GM12878 (cell line): ENCODE measurements at regions of chr18 and their contacts with region 1.

Region 1: DNA sequence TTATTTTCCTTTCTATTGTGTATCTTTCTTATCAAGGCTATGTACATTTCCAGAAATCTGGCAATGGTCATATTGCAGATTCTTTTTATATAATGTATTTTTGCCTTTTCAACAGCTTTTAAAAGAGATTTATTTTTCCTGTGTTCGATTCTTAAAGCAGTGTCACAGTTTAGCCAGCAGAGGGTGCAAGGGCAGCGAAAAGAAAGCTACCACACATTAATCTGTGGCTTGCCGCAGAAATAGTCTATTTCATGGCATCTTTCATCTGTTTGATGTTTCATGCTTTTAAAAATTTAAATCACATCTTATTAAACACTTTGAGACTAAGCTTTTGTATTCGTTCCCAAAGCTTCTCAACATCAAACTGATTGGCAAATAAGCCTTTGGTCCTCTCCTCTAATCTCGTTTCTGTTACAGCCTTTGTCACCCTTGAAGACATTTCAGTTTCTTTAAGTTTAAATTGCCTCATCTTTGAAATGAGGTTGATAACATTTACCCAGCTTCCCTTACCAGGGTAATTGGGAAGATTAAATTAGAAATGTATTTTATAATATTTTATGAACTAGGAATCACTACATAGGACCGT is 73.3 kb downstream of the PIK3C3 start:
- DNase-seq: no peak
- ATAC-seq: 0 out of 3 replicates have a peak, but pooled peaks have one; percentile 22
- H3K4me3 ChIP-seq: no peak overlapping the region
- H3K27ac ChIP-seq: no peak overlapping the region
- H3K4me1 ChIP-seq: peaks cover 33% of the 10 kb centered on the region
- H3K27me3 ChIP-seq: no peaks in the 10 kb centered on the region
- CTCF ChIP-seq: peak; percentile 63 to 77 (median 74)
- EP300 ChIP-seq: no peak
- POLR2A ChIP-seq: no peak
- RAD21 ChIP-seq: peak; percentile 40; the same call in 1 of the 2 replicates

Region 2: DNA sequence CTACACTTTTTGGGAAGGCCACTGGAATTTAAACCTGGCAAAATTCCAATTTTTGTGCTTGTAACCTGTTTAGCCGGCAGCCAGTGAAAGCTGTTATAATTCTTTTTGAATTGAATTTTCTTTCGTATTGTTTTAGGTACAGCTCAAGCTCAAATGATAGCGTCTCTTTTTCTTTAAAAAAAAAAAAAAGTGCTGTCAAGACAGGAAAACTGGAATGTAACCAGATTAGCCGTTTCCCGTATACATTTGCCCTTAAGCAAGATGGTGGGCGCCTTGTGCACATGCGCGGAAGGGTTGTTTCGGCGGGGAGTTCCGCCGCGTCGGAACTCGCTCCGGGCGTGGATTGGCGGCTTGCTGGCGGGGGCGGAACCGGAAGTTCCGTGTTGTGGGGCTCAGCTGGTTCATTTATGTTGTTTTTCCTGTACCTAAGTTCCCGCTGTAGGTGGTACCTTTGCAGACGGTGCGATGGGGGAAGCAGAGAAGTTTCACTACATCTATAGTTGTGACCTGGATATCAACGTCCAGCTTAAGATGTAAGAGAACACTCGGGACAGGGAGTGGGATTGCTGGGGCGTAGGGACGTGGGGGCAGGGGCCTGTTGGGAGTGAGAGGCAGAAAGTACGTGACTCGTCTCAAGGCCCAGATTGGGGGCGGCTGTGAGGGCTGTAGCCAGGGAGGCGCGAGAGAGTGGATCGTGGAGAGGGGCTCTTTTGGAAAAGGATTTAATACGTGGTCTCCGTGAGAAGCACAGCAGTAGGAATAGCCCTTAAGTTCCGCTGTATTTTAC is 73.3 kb before region 1 on chr18 and contains the start of gene PIK3C3:
- CTCF ChIA-PET with region 1: interaction called, 4 read pairs
- POLR2A ChIA-PET with region 1: interaction called, 3 read pairs
- RAD21 ChIA-PET with region 1: interaction called, 3 read pairs
- SMC1A ChIA-PET with region 1: interaction called, 6 read pairs
- in situ Hi-C with region 1: no loop called
- intact Hi-C with region 1: loop called (anchors 5 kb)
- DNase-seq: peak; percentile 92
- ATAC-seq: peak; percentile 93
- H3K4me3 ChIP-seq: peak within 1 kb of the TSS; percentile 94
- H3K27ac ChIP-seq: peak within 1 kb of the TSS; percentile 71
- H3K4me1 ChIP-seq: no peaks in the 10 kb centered on the region; the same call in 1 of the 2 replicates
- H3K27me3 ChIP-seq: no peaks in the 10 kb centered on the region
- CTCF ChIP-seq: no peak
- EP300 ChIP-seq: no peak
- POLR2A ChIP-seq: peak; percentile 74
- RAD21 ChIP-seq: no peak
- polyA plus RNA-seq, gene PIK3C3: 20.1 to 37.7 TPM

Region 3: DNA sequence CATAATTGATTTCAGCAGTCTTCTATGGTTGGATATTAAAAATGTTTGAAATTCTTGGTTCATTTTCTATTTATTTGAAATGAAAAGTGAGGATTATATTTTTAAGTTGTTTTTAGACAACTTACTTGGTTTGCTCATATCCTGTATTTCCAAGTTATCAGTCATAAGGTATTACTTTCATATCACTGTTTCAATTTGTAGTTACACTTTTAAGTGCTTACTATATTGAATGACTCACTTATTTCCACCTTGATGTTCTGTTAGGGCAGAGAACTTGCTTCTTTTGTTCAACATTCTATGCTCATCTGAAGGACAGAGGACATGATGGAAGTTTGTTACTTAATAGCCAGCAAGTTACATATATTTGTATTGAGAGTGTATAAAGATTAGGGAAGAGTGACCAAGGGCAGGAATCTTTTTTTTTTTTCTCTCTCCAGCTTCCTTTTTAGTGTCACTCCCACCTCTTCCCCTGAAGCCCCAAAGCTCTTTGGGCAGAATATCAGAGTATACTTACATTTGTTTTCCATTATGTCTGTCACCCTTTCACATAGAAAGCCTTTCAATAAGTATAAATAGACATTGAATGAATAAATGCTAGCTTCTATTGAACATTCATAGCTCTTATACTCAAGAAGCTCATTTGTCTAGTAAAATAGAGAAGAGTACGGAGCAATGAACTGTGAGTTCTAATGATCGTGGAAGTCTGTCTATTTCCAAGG is 45.2 kb before region 1 on chr18:
- CTCF ChIA-PET with region 1: interaction called, 12 read pairs
- POLR2A ChIA-PET with region 1: no interaction called
- RAD21 ChIA-PET with region 1: interaction called, 4 read pairs
- SMC1A ChIA-PET with region 1: interaction called, 10 read pairs
- in situ Hi-C with region 1: no loop called
- intact Hi-C with region 1: no loop called
- DNase-seq: no peak
- ATAC-seq: peak; percentile 94
- H3K4me3 ChIP-seq: no peak overlapping the region
- H3K27ac ChIP-seq: peak overlapping the region; percentile 50; the same call in 1 of the 2 replicates
- H3K4me1 ChIP-seq: peaks cover 9% of the 10 kb centered on the region
- H3K27me3 ChIP-seq: no peaks in the 10 kb centered on the region
- CTCF ChIP-seq: no peak
- EP300 ChIP-seq: peak in 1 of 2 experiments; percentile 36; a peak in 1 of 4 replicates
- POLR2A ChIP-seq: no peak
- RAD21 ChIP-seq: no peak

Region 4: GRCh38 chr18:42005782-42006181 is 22.6 kb before region 1 on chr18:
- CTCF ChIA-PET with region 1: interaction called, 22 read pairs
- POLR2A ChIA-PET with region 1: no interaction called
- RAD21 ChIA-PET with region 1: no interaction called
- SMC1A ChIA-PET with region 1: interaction called, 6 read pairs
- in situ Hi-C with region 1: no loop called
- intact Hi-C with region 1: no loop called
- DNase-seq: no peak
- ATAC-seq: no peak
- H3K4me3 ChIP-seq: no peak overlapping the region
- H3K27ac ChIP-seq: no peak overlapping the region
- H3K4me1 ChIP-seq: peaks cover 9% of the 10 kb centered on the region
- H3K27me3 ChIP-seq: no peaks in the 10 kb centered on the region
- CTCF ChIP-seq: no peak
- EP300 ChIP-seq: no peak
- POLR2A ChIP-seq: no peak
- RAD21 ChIP-seq: no peak

Region 5: GRCh38 chr18:42038936-42039335 is 10.6 kb after region 1 on chr18:
- CTCF ChIA-PET with region 1: interaction called, 27 read pairs
- POLR2A ChIA-PET with region 1: interaction called, 3 read pairs
- RAD21 ChIA-PET with region 1: interaction called, 3 read pairs
- SMC1A ChIA-PET with region 1: interaction called, 3 read pairs
- in situ Hi-C with region 1: no loop called
- intact Hi-C with region 1: no loop called
- DNase-seq: no peak
- ATAC-seq: no peak
- H3K4me3 ChIP-seq: no peak overlapping the region
- H3K27ac ChIP-seq: no peak overlapping the region
- H3K4me1 ChIP-seq: no peaks in the 10 kb centered on the region
- H3K27me3 ChIP-seq: no peaks in the 10 kb centered on the region
- CTCF ChIP-seq: no peak
- EP300 ChIP-seq: no peak
- POLR2A ChIP-seq: no peak
- RAD21 ChIP-seq: no peak

Region 6: DNA sequence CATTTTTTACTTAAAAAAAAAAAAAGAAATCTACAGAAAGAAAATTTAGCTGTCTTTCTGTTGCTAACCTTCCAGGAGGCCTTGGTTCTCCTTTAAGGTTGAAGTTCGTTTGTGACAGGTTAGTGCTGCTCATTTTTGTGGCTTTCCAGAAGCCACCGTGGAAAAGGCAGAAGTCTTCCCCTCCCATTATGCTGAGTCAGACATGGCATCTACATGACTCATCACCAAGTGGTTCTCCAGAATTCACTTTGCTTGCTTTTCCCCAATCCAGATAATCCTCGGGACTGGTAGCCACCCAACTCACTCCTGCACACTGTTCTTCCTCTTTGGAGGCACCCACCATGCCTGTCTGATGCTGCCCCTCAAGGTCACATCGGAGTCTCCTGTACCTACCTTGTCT is 155.4 kb after region 1 on chr18:
- CTCF ChIA-PET with region 1: interaction called, 3 read pairs
- POLR2A ChIA-PET with region 1: no interaction called
- RAD21 ChIA-PET with region 1: no interaction called
- SMC1A ChIA-PET with region 1: interaction called, 13 read pairs
- in situ Hi-C with region 1: no loop called
- intact Hi-C with region 1: loop called (anchors 10 kb)
- DNase-seq: no peak
- ATAC-seq: no peak
- H3K4me3 ChIP-seq: no peak overlapping the region
- H3K27ac ChIP-seq: no peak overlapping the region
- H3K4me1 ChIP-seq: no peaks in the 10 kb centered on the region
- H3K27me3 ChIP-seq: no peaks in the 10 kb centered on the region
- CTCF ChIP-seq: no peak
- EP300 ChIP-seq: no peak
- POLR2A ChIP-seq: no peak
- RAD21 ChIP-seq: no peak